MCF 10A (cell line): ENCODE measurements at regions of chr15 and their contacts with region 1.

Region 1: GRCh38 chr15:34223904-34224596 is 766 bp upstream of the EMC4 start:
- DNase-seq: peak; percentile 11
- H3K4me3 Mint-ChIP-seq: peak overlapping the region; percentile 99
- H3K27ac Mint-ChIP-seq: peak overlapping the region; percentile 99
- H3K4me1 Mint-ChIP-seq: peaks cover 5% of the 10 kb centered on the region
- H3K27me3 Mint-ChIP-seq: no peaks in the 10 kb centered on the region
- CTCF ChIP-seq: no peak

Region 2: GRCh38 chr15:34101366-34102175 is 122.5 kb before region 1 on chr15 and contains the starts of genes EMC7 and PGBD4:
- CTCF ChIA-PET with region 1: interaction called, 3 read pairs
- POLR2A ChIA-PET with region 1: interaction called, 15 read pairs
- intact Hi-C with region 1: no loop called
- DNase-seq: peak; percentile 99
- H3K4me3 Mint-ChIP-seq: peak within 1 kb of the TSS; percentile 98
- H3K27ac Mint-ChIP-seq: peak within 1 kb of the TSS; percentile 99
- H3K4me1 Mint-ChIP-seq: peaks cover 5% of the 10 kb centered on the region
- H3K27me3 Mint-ChIP-seq: no peaks in the 10 kb centered on the region
- CTCF ChIP-seq: no peak
- total RNA-seq, gene EMC7: 98.2 and 134 TPM in 2 replicates
- total RNA-seq, gene PGBD4: 2.4 and 2.6 TPM in 2 replicates

Region 3: GRCh38 chr15:34161329-34161955 is 62.6 kb before region 1 on chr15:
- CTCF ChIA-PET with region 1: no interaction called
- POLR2A ChIA-PET with region 1: no interaction called
- intact Hi-C with region 1: no loop called
- DNase-seq: no peak
- H3K4me3 Mint-ChIP-seq: no peak overlapping the region
- H3K27ac Mint-ChIP-seq: no peak overlapping the region
- H3K4me1 Mint-ChIP-seq: no peaks in the 10 kb centered on the region
- H3K27me3 Mint-ChIP-seq: no peaks in the 10 kb centered on the region
- CTCF ChIP-seq: no peak

Region 4: GRCh38 chr15:34241372-34242330 is 17.6 kb after region 1 on chr15:
- CTCF ChIA-PET with region 1: interaction called, 8 read pairs
- POLR2A ChIA-PET with region 1: interaction called, 16 read pairs
- intact Hi-C with region 1: no loop called
- DNase-seq: peak; percentile 64
- H3K4me3 Mint-ChIP-seq: no peak overlapping the region
- H3K27ac Mint-ChIP-seq: no peak overlapping the region
- H3K4me1 Mint-ChIP-seq: peaks cover 13% of the 10 kb centered on the region
- H3K27me3 Mint-ChIP-seq: no peaks in the 10 kb centered on the region
- CTCF ChIP-seq: peak; percentile 68

Region 5: GRCh38 chr15:34252545-34252944 is 28.5 kb after region 1 on chr15:
- CTCF ChIA-PET with region 1: no interaction called
- POLR2A ChIA-PET with region 1: no interaction called
- intact Hi-C with region 1: no loop called
- DNase-seq: no peak
- H3K4me3 Mint-ChIP-seq: no peak overlapping the region
- H3K27ac Mint-ChIP-seq: no peak overlapping the region
- H3K4me1 Mint-ChIP-seq: no peaks in the 10 kb centered on the region
- H3K27me3 Mint-ChIP-seq: no peaks in the 10 kb centered on the region
- CTCF ChIP-seq: no peak

Region 6: DNA sequence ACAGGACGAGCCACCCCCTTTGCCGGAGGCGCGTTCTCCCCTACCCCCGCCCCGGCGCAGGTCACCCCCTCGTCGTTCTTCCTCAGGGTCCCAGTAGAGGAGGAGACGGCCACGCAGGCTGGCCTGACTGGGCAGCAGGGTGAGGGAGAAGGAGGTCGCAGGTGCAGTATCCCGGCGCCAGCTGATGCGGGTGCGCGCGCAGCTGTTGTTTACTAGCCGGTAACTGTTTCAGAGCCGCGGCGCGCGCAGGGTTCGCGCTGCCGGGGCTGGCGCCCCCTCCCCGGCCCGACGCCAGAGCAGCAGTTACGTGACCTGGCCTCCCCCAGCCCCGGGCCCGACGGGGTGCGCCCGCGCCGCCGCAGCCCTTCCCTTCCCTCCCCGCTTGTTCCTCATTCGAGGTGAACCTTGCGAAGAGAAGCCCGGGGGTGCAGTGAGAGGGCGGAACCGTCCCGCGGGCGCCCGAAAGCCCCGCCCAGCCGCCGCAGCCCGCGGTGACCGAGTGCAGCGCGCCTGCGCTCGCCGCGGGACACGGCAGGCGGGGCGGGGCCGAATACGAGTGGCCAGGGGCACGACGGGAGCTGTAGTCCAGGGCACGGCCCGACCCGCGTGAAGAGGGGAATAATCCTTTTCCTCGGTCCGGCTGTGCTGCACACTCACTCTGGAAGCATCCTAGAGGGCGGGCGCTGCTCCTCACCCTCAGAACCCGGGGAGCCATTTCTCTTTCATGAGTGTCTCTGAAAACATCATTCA is 113.7 kb after region 1 on chr15 and contains the start of gene SLC12A6:
- CTCF ChIA-PET with region 1: no interaction called
- POLR2A ChIA-PET with region 1: interaction called, 20 read pairs
- intact Hi-C with region 1: no loop called
- DNase-seq: peak; percentile 88
- H3K4me3 Mint-ChIP-seq: peak within 1 kb of the TSS; percentile 83
- H3K27ac Mint-ChIP-seq: peak within 1 kb of the TSS; percentile 49
- H3K4me1 Mint-ChIP-seq: peaks cover 32% of the 10 kb centered on the region
- H3K27me3 Mint-ChIP-seq: no peaks in the 10 kb centered on the region
- CTCF ChIP-seq: no peak
- total RNA-seq, gene SLC12A6: 11.7 and 15.3 TPM in 2 replicates

Region 7: DNA sequence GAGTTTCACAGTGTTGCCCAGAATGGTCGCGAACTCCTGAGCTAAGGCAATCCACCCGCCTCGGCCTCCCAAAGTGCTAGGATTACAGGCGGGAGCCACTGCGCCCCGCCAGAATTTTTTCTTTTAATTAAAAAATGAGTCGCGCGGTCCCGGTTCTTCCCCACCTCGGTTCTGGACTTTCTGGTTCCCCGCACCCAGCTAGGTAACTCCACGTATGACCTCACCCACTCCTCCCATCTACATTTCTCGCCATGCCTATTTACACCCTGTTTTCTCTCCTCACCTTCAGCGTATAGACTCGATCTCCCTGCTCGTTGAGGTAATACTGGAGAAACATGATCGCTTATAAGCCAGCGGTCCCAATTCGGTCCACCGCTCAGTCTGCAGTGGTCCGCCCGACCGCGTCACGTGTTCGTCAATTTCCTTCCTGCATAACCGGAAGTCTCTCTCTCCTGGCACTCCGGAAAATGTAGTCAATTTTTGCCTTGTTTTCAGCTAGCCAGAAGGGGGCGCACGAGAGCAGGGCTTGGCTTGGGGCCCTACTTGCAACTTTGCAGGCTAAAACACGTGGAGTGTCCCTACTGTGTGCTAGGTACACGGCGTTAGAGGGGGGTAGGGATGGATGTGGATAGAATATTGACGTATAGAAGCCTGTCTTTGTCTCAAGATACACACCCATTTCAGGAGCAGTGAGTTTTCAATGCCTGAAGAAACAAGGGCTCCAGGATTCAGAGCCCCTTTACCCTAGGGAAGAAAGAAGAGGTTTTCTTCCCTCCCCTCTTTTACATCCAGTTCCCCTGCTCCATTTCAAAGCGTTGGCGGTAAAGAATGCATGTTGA is 118.9 kb after region 1 on chr15 and contains the starts of genes NOP10 and NUTM1:
- CTCF ChIA-PET with region 1: no interaction called
- POLR2A ChIA-PET with region 1: interaction called, 20 read pairs
- intact Hi-C with region 1: no loop called
- DNase-seq: peak; percentile 91
- H3K4me3 Mint-ChIP-seq: no peak within 1 kb of the TSS
- H3K27ac Mint-ChIP-seq: no peak within 1 kb of the TSS
- H3K4me1 Mint-ChIP-seq: peaks cover 5% of the 10 kb centered on the region
- H3K27me3 Mint-ChIP-seq: peaks cover 2% of the 10 kb centered on the region
- CTCF ChIP-seq: peak; percentile 91
- total RNA-seq, gene NOP10: 168 and 187 TPM in 2 replicates
- total RNA-seq, gene NUTM1: not detected in 2 replicates